Activated T-helper 1 cell treated with anti-CD3 and anti-CD28 coated beads, Interleukin-12 subunit alpha, Interleukin-12 subunit beta, Interleukin-2, Interleukin-4 antibody, amounts not matched to agents 30 ng/mL and 10 ng/mL and 1 ng/mL, durations not matched to agents 14 hours and 24 hours and 36 hours (primary cell): ENCODE measurements at regions of chrX and their contacts with region 1.

Region 1: DNA sequence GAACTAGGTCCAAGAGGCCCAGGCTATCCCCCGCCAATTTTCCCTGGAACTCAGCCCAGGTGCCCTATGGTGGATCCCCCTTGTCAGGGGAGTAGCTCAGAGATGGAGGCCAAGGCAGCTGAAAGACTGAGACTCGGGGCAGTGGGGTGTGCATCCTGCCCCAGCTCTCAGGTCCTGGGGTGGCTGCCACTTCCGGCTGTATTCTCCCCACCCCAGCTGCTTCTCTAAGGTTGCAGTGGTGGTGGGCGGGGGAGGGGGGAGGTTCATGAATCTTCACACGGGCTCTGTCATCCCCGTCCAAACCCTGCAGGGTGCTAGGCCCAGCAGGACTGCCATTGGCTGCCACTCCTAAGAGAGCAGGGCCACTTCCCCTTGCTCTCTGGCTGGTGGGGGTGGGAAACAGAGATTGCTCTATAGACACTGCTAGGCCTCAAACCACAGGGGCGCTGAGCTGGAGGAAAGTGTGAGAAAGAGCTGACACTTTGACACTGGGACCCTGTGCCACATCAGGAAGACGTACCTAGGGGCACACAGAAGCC is 1.5 kb downstream of the SASH3 start:
- DNase-seq: peak; percentile 65
- H3K4me3 Mint-ChIP-seq: peak overlapping the region; percentile 87
- H3K27ac Mint-ChIP-seq: peak overlapping the region; percentile 91
- H3K4me1 Mint-ChIP-seq: peaks cover 63% of the 10 kb centered on the region
- H3K27me3 Mint-ChIP-seq: no peaks in the 10 kb centered on the region

Region 2: DNA sequence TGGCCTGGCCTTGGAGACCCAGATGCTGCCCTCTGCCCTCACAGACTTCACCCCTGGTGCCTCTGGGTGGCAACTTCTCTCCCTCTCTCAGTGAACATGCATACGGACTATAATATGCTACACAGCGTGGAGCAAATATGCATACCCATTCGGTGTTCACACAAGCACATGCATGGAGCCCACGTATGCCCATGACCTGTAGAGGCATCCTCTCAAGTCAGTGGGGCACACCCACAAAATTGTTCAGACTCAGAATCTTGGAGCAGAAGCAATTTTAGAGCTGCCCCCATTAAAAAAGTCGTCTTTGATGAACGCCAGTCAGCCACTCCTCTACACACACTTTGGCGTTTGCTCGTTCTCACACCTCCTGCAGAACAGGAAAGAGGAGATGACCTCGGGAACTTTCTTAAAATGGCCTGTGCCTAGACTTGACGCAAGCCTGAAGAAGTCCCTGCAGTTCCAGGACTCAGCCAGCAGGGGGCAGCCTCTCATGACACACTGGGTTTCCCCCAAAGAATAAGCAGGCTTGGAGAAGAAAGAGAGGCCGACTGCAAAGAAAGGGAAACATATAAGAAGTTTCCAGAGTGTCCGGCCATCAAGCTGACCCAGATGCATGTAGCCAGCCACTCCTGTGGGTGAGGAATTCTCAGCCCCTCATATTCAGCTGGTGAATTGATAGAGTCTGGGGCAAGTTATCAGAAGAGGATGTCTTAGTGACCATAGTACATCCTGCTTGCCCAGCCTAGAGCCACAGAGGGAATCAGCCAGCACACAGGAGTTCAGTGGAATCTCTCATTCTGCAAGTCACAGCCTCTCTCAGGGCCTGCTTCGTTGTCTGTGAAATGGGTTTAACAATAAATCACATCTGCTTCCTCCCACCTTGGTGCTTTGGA is 143.7 kb before region 1 on chrX:
- intact Hi-C with region 1: loop called (anchors 2 kb)
- DNase-seq: peak; percentile 48
- H3K4me3 Mint-ChIP-seq: no peak overlapping the region
- H3K27ac Mint-ChIP-seq: no peak overlapping the region
- H3K4me1 Mint-ChIP-seq: no peaks in the 10 kb centered on the region
- H3K27me3 Mint-ChIP-seq: no peaks in the 10 kb centered on the region

Region 3: DNA sequence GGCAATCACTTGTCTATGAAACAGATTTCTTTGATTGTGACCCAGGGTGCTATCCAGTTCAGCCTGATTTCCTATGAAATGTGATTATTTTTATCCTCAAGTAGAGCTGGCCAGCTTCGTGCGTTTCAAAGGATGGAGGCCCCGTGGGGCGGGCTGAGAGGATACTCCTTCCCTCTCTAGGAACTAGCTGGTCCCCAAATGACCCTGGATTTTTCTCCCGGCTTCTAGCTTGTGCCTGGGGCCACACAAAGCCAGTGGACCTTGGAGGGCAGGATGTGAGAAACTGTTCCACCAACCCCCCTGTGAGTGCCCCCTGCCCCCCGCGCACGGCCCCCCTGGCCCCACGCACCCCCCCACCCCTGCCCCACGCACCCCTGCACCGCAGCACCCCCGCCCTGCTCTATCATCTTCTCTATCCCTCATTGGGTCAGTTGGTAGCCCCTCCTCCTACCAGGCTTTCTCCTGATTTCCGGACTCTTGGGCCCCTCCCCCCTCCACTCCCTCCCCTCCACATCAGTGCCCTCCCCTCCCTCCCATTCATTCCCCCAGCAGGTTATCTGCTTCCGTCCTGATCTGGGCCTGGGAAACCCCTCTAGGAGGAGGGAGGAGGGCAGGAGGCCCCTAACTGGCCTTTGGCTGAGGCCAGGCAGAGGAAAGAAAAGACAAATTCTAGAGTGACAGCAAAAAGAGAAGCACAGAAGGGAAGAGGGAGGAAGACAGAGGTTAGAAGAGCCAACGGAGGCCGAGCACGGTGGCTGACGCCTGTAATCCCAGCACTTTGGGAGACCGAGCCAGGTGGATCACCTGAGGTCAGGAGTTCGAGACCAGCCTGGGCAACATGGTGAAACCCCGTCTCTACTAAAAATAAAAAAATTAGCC is 39.1 kb before region 1 on chrX:
- intact Hi-C with region 1: loop called (anchors 5 kb)
- DNase-seq: no peak
- H3K4me3 Mint-ChIP-seq: no peak overlapping the region
- H3K27ac Mint-ChIP-seq: peak overlapping the region; percentile 84
- H3K4me1 Mint-ChIP-seq: peaks cover 50% of the 10 kb centered on the region
- H3K27me3 Mint-ChIP-seq: no peaks in the 10 kb centered on the region

Region 4: DNA sequence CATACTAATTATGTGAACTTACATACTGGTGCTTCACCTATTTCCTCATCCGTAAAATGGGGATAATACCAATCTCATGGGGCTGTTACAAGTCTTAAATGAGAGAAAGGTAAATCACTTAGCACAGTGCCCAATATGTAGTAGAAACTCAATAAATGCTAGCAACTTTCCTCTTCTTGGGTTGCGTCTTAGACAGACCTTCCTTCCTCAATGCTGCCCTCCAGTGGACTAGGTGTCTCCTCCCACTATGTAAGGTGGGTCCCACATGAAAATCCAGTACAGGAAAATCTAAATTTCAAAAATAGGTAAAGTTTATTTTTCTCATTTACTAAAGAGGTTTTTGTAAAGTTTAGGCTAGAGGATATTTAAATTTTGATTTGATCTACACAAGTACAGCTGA is 41.9 kb after region 1 on chrX:
- intact Hi-C with region 1: loop called (anchors 1 kb)
- DNase-seq: peak; percentile 24
- H3K4me3 Mint-ChIP-seq: no peak overlapping the region
- H3K27ac Mint-ChIP-seq: no peak overlapping the region
- H3K4me1 Mint-ChIP-seq: peaks cover 18% of the 10 kb centered on the region
- H3K27me3 Mint-ChIP-seq: no peaks in the 10 kb centered on the region

Region 5: GRCh38 chrX:130009658-130010223 is 228.5 kb after region 1 on chrX:
- intact Hi-C with region 1: no loop called
- DNase-seq: no peak
- H3K4me3 Mint-ChIP-seq: no peak overlapping the region
- H3K27ac Mint-ChIP-seq: no peak overlapping the region
- H3K4me1 Mint-ChIP-seq: no peaks in the 10 kb centered on the region
- H3K27me3 Mint-ChIP-seq: no peaks in the 10 kb centered on the region

Region 6: DNA sequence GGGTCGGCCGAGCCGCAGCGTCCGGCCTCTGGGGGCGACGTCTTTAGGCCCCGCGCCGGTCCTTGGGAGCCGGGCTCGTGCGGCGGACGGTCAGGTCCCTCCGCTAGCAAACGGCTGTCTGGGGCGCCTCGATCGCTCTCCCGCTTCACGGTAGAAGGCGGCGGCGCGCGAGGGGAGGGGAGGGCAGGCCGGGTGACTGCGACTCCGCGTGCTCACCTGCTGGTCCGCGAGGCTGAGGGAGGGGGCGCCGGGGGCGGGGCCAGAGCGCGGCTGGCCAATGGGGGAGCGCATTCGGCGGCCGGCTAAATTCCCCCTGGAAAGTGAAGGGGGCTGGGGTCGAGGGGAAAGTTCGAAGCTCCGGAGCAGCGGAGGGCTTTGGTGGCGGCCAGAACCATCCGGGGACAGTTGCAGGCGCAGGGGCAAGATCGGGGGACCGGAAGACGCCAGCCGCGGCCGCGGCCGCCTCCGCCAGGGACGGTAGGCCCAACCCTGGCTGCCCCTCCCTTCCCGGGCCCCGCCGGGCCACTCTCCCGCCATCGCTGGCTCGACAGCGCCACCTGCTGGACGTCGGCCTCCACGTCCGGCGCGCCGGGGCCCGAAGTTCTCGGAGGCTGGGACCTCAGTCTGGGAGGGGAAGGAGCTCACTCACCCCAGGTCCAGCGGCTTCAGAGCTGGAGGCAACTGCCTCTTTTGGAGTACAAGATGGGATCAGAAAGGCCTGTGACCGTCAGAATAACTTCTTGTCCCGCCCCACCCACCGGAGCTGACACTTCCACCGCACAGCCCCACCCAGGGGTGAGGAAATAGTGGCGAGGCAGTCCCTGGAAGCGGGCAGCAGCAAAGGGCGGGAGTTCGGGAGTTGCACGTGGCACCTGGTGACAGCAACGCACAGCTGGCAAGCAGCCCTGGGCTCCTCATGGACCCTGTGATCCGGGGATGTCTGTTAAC is 279.2 kb after region 1 on chrX:
- intact Hi-C with region 1: no loop called
- DNase-seq: peak; percentile 78
- H3K4me3 Mint-ChIP-seq: peak overlapping the region; percentile 73
- H3K27ac Mint-ChIP-seq: peak overlapping the region; percentile 44
- H3K4me1 Mint-ChIP-seq: no peaks in the 10 kb centered on the region
- H3K27me3 Mint-ChIP-seq: peaks cover 2% of the 10 kb centered on the region

Region 7: DNA sequence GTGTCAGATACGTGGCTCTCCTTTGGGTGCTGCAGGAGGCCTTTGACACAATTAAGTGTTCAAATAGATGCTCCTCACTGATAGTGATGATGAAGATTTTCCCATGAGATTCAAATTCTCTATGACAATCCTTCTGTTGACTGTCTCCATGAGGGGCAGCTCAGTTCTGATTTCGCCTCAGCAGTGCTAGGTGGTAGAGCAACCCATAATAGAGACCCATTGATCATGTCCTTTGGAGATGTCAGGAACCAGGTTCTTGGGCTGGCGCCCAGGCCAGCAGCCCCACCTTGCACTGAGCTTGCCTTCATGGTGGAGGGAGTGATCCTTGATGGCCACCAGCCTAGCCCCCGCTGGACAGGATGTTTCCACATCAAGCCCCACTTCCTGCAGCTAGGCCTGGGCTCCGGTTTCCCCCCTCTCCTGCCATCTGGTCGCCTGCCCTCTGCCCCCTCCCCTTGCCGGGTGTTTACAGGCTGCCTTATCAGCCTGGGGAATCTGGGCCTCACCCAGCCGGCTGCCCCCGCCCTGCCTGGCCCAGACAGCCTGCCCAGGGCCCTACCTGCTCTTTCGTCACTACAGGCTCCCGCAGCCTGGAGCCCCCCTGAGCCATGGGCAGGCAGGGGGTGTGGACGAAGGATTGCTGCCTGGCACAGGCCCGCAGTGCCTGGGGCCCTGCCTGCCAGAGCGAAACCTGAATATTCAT is 316.5 kb after region 1 on chrX:
- intact Hi-C with region 1: no loop called
- DNase-seq: no peak
- H3K4me3 Mint-ChIP-seq: peak overlapping the region; percentile 22
- H3K27ac Mint-ChIP-seq: no peak overlapping the region
- H3K4me1 Mint-ChIP-seq: peaks cover 27% of the 10 kb centered on the region
- H3K27me3 Mint-ChIP-seq: no peaks in the 10 kb centered on the region

Region 8: DNA sequence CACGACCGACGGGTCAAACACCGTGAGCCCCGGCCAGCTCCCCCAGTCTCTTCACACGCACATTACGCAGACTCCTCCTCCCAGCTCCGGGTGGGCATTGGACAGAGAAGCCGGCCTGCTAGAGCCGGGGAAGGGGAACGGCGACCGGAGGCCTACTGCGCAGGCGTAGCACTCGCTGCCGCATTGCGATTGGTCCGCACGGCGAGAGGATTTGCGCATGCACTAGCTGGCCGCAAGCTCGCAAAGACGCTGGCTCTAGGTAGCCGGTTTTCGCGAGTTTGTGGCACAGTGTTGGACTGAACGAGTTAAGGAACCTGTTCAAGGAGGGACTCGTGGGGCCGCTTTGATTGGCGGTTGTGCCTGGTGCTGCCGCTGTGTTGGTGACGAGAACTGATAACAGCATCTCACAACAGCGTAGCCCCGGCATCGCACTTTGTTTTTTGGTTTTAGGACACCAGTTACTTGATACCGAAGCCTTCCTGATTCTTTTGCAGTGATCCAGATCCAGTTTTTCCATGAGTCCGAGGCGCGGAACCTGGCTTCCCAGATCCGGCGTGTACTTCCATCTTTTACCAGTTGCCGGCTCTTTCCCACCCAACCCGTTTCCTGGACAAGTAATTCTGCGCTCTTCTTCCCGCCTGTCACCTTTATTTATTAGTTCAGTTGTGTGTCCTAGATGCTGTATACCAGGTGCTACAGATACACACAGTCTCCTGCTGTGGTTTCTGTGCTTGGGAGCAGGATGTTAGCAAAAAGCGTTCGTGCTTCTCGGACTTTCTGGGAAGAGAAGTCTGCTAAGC is 384.7 kb after region 1 on chrX and contains the start of gene AIFM1:
- intact Hi-C with region 1: loop called (anchors 10 kb)
- DNase-seq: peak; percentile 86
- H3K4me3 Mint-ChIP-seq: peak within 1 kb of the TSS; percentile 95
- H3K27ac Mint-ChIP-seq: peak within 1 kb of the TSS; percentile 98
- H3K4me1 Mint-ChIP-seq: peaks cover 20% of the 10 kb centered on the region
- H3K27me3 Mint-ChIP-seq: no peaks in the 10 kb centered on the region
- total RNA-seq, gene AIFM1: 46.0 and 50.2 TPM in 2 replicates